Ovary (tissue), 10 donors: ENCODE measurements at regions of chr18 and their contacts with region 1.

Region 1: DNA sequence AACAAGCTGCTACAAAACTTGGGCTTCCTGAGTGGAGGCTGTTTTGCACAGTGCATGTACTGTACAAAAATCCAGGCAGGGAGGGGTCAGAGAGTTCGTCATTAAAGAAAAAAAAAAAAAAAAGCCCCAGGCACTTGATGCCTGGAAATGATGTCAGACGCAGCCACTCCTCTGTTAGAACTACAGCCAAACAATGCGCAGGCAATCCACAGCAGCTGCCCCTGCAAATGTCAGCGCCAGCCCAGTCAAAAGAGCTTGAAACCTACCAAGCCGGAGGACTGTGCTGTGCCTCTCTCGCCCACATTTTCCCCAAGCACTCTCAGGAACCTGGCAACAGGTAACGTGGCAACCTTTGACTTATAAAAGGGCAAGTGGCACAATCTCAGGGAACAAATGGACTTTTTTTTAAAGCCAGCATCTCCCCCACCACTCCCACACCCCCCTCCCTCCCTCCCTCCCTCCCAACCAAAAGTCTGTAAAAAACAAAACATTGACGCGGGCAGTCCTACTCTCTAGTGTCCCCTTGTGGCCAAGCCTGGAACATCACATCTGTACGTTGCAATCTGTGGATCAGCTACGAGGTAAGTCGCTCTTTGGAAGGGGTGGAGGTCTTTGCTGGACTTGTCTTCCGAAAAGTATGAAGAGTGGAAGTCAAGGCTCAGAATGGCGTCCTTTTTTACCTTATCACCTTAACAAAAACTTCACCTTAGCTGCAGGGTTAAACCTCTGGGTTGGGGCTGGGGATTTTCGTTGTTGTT is 144.1 kb downstream of the TGIF1 start:
- DNase-seq: peak; percentile 86 to 92 (median 88)
- H3K4me3 ChIP-seq: peak overlapping the region; percentile 44
- H3K27ac ChIP-seq: peak overlapping the region; percentile 85 to 86
- H3K4me1 ChIP-seq: peaks cover 14% of the 10 kb centered on the region
- H3K27me3 ChIP-seq: no peaks in the 10 kb centered on the region
- CTCF ChIP-seq: peak; percentile 74 to 88 (median 86)
- EP300 ChIP-seq: peak; percentile 86
- POLR2A ChIP-seq: peak; percentile 46

Region 2: DNA sequence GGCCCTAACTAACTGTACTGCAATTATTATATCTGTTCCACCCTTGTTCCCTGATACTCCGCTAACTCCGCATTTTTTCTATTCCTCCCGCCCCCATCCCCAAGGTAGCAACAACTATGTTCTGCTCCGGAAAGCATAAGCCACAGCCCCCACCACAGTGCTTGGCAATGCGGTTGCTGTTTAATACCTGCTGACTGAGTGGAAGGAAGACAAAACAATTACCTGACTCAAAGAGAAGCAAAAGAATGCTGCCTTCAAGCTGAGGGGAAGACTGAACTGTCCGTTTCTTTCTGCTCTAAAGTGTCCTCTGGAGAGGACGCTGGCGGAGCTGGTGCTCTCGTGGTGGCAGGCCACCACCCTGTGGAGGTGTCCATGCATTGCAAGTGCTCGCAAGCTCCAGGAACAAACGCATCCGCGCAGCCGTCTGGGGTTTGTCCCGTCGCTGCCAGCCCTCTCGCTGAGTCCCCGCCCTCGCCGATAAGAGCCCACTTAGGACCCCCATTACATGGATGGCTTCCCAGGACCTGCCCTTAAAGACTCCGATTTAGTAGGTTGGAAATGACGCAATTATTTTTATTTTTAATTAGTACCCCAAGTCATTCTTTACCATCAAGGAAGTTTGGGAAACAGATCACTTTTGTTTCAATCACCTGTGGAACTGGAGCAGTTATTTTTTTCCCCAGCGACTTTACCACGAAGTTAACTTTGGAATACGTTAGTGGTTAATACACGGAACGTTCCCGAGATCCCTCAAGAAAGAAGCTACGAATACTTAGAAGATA is 348.0 kb before region 1 on chr18:
- intact Hi-C with region 1: loop called in 1 of 4 experiments (anchors 1 kb)
- DNase-seq: peak; percentile 84 to 91 (median 84)
- H3K4me3 ChIP-seq: peak overlapping the region; percentile 99
- H3K27ac ChIP-seq: peak overlapping the region; percentile 87 to 93
- H3K4me1 ChIP-seq: peaks cover 4% of the 10 kb centered on the region
- H3K27me3 ChIP-seq: no peaks in the 10 kb centered on the region
- CTCF ChIP-seq: peak; percentile 47 to 93 (median 80)
- EP300 ChIP-seq: no peak
- POLR2A ChIP-seq: peak; percentile 15

Region 3: DNA sequence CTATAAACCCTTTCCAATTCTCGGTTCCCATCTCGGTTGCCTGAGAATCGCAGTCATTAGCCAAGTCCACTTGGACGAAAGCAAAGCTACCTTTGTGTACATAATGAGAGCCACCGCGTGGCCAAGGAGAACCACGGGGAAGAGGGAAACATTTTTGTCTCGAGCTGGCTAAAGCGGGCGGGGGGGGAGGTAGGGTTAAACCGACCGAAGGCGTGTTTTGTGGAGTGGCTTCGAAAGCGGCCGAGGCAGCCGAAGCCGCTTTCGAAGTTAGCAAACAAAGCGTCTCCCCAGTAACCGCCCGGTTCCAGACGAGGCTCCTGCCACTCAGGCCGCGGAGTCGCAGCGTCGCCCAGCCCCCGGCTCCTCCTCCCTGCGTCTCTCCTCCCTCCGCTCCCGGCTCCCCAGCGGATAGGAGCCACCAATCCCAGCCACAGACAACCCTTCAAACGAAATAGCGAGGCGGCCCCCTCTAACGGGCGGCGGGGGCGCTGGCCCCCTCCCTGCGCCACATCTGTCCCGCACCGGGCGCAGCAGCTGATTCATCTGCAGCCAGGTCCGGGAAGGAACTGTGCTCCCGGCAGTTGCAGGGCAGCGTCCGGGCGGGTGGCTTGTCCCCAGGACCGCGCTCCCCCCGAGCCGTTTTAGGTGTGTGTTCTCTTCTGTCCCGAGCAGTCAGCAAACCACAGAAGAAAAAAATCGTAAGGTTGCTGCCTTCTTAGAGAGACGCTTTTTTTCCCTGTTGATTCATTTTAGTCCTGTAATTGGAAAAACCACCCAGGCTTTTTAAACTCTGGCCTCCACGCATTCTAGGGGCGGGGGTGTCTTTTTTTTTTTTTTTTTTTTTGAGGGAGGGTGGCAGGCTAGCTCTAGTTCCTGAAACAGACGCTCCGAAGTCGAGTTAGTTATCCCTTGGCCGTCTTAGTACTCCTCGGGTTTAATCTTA is 145.9 kb before region 1 on chr18:
- intact Hi-C with region 1: loop called (anchors 2 to 10 kb)
- DNase-seq: peak; percentile 92 to 94 (median 93)
- H3K4me3 ChIP-seq: peak overlapping the region; percentile 66
- H3K27ac ChIP-seq: peak overlapping the region; percentile 72 to 97
- H3K4me1 ChIP-seq: peaks cover 5% of the 10 kb centered on the region
- H3K27me3 ChIP-seq: no peaks in the 10 kb centered on the region
- CTCF ChIP-seq: peak in 1 of 3 donors; percentile 27
- EP300 ChIP-seq: no peak
- POLR2A ChIP-seq: peak; percentile 77

Region 4: DNA sequence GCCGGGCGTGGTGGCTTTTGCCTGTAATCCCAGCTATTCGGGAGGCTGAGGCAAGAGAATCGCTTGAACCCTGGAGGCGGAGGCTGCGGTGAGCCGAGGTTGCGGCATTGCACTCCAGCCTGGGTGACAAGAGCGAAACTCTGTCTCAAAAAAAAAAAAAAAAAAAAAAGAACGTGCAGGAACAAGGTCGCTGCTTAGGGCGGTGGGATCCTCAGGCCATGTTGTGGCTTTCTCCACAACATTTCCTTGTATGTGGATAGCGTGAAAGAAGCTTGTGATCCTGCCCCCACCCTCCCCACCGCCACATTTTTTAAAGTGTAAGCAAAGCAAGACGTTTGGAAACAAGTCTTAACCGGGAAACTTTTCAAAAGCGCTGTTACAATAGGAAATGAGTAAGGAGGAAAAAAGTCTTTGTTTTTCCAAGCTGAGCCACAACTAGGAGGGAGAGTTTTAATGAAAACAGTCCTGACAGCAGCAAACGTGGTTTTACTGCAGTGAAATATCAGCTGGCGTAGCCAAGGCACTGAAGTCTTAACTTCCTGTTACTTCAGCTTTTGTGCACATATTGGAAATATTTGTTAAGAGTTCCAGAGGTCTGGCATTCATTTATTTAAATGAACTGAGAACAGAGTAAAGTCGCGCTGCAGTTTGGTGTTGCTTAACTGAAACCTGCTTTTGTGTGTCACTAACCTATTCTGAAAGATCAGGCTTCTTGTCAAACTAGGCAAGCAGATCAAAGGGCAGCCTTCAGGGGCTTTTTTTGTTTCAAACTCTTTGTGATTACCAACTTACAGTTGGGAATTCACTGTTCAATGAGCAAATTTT is 140.3 kb before region 1 on chr18:
- intact Hi-C with region 1: loop called (anchors 2 to 10 kb)
- DNase-seq: peak; percentile 60 to 75 (median 62)
- H3K4me3 ChIP-seq: peak overlapping the region; percentile 66
- H3K27ac ChIP-seq: peak overlapping the region; percentile 72 to 97
- H3K4me1 ChIP-seq: peaks cover 3% of the 10 kb centered on the region
- H3K27me3 ChIP-seq: no peaks in the 10 kb centered on the region
- CTCF ChIP-seq: no peak
- EP300 ChIP-seq: no peak
- POLR2A ChIP-seq: no peak

Region 5: DNA sequence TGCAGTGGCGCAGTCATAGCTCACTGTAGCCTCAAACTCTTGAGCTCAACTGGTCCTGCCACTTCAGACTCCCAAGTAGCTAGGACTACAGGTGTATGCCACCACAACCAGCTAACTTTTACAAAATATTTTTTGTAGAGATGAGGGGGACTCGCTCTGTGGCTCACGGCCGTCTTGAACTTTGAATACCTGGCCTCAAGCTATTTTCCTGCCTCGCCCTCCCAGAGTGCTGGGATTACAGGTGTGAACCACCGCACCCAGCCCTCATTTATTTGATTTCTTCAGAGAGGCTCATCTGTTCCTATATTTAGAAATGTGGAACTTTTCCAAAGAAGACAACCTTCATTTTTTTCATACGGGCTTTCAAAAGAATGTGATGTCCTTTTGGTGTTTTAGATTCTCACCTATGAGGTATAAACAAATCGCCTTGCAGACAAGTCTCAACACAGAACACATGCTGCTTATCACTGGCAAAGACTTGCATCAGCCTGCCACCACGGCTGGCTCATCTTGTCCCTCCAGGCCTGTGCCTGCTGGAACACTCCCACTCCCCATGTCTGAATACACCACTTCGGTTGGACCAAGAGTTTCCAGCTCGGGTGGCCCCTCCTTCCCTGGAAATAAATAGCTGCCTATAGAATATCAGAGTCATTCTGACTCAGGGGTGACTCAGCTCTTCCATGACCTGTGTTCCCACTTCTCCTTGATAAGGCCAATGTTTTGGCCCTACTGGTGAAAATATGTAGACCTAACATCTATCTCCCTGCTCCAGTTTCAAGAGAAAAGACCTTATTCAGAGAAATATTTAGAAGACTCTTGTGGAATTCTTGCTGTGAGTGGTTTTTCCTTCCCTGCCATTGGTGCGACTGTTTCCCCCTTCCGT is 58.5 kb after region 1 on chr18:
- intact Hi-C with region 1: loop called in 1 of 4 experiments (anchors 5 kb)
- DNase-seq: peak; percentile 45 to 70 (median 53)
- H3K4me3 ChIP-seq: no peak overlapping the region
- H3K27ac ChIP-seq: no peak overlapping the region
- H3K4me1 ChIP-seq: peaks cover 14% of the 10 kb centered on the region
- H3K27me3 ChIP-seq: no peaks in the 10 kb centered on the region
- CTCF ChIP-seq: no peak
- EP300 ChIP-seq: no peak
- POLR2A ChIP-seq: no peak

Region 6: DNA sequence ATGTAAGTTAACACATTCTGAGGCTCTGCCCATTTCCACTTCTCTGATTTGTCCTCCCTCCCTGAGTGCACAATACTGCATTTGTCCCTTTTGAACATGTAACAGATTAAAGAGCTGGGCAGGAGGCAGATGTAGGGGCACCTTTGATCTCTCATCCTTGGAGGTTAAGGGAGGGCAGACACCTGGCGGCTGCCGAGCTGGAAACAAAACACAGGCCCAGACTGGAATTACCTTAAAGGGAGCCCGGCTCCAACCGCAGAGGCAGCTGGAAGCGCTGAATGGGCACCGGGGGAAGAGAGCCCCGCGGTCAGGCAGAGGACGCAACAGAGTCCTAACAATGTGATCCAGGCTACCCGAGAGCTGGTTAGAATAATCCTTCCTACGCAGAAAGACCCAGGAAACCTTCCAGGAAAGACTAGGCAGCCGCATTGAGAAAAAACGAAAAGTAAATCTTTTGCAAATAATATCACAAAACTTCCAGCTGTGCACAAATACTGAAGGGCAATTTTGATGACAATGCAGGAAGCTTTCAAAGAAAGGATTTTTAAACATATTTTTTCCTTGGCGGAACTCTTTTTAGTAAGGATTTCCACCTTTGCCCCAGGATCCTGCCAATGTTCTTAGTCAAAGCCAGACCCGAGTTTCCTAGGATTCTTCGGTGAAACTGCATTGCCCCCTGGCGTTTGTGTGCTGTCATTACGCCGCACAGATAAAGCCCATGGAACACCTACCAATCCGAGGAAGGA is 71.9 kb after region 1 on chr18:
- intact Hi-C with region 1: loop called in 2 of 4 experiments (anchors 5 to 10 kb)
- DNase-seq: peak; percentile 71 to 89 (median 87)
- H3K4me3 ChIP-seq: no peak overlapping the region
- H3K27ac ChIP-seq: peak overlapping the region in 1 of 2 donors; percentile 75
- H3K4me1 ChIP-seq: no peaks in the 10 kb centered on the region
- H3K27me3 ChIP-seq: no peaks in the 10 kb centered on the region
- CTCF ChIP-seq: peak; percentile 85 to 95 (median 95)
- EP300 ChIP-seq: no peak
- POLR2A ChIP-seq: no peak